Mammary epithelial cell (primary cell): ENCODE measurements at regions of chr9 and their contacts with region 1.

Region 1: DNA sequence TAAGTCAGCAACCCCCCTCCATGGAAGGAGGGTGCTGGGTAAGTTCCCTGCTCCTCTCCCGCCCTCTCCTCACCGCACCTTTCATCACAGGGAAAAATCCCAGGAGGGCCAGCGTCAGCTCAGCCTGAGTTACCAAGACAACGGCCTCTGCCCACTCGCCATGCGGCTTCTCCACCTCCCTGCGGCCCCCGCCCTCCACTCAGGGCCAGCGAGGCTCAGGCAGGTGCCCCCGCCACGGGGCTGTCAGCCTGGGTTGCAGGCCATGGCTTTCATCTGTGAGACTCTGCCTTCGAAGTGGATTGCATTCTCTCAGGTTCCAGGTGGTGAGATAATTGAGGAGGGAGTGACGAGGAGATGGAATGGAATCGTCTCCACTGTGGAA is 27.2 kb upstream of the LAMC3 start:
- DNase-seq: no peak
- H3K4me3 ChIP-seq: no peak overlapping the region
- H3K27ac ChIP-seq: no peak overlapping the region
- H3K4me1 ChIP-seq: no peaks in the 10 kb centered on the region
- H3K27me3 ChIP-seq: no peaks in the 10 kb centered on the region
- CTCF ChIP-seq: no peak

Region 2: DNA sequence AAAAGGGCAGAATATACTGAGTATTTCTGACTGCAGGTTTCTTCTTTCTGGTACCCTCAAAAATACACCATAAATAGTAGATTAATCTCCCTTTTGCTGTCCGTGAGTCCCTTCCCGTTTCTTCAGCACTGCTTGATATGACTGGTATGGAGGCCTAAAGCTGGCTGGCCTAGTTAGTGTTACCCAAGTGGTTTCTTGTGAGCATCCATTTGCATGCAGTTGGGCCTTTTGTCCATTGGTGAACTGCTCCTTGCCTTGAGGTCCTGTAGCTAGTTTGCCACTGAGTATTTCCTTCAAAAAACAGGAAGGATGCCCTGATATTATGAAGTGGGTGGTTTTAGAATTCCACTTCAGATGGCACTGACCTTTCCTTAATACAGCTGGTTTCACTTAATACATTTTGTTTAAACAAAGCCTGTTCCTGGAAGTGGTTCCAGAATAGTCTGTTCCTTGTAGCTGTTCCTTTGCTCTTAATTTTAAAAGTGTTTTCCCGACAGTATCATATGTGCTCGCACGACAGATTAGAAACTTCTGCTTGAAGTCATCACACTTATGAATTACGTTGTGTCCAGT is 186.7 kb before region 1 on chr9:
- CTCF ChIA-PET with region 1: no interaction called
- dilution Hi-C with region 1: loop called (anchors 5 kb)
- in situ Hi-C with region 1: no loop called
- intact Hi-C with region 1: no loop called
- DNase-seq: no peak
- H3K4me3 ChIP-seq: no peak overlapping the region
- H3K27ac ChIP-seq: no peak overlapping the region
- H3K4me1 ChIP-seq: no peaks in the 10 kb centered on the region
- H3K27me3 ChIP-seq: no peaks in the 10 kb centered on the region
- CTCF ChIP-seq: no peak

Region 3: DNA sequence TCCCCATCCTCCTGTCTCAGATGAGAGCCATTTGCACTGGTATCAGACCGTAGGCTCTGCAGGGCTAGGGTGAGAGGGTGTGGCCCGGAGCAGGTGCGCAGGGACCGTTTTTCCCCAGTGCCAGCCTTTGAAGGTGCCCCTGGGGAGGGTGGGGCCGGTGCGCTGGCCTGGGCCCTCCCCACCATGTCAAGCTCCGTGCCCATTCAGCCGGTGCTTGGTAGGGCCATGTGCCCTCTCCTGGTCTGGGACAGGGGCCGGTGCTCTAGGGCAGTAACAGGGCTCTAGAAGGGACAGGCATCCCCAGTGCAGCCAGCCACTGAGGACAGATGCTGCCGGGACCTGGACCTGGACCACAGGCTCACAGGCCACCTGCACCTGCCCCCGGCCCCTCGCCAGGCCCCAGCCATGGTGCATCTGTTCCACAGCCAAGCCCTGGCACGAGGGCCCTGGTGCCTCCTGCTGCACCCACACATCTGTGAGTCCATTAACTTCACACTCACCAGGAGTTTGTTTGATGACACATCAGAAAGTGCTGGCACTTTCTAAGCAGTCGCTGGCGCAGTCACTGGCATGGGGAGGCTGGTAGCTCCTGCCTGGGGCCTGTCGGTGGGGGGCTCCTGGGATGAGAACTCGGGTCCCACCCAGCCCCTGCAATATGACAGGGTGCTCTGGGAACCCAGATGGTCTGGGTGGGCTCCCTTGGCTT is 80.1 kb before region 1 on chr9:
- CTCF ChIA-PET with region 1: no interaction called
- dilution Hi-C with region 1: loop called (anchors 5 kb)
- in situ Hi-C with region 1: no loop called
- intact Hi-C with region 1: no loop called
- DNase-seq: no peak
- H3K4me3 ChIP-seq: no peak overlapping the region
- H3K27ac ChIP-seq: no peak overlapping the region
- H3K4me1 ChIP-seq: no peaks in the 10 kb centered on the region
- H3K27me3 ChIP-seq: no peaks in the 10 kb centered on the region
- CTCF ChIP-seq: no peak

Region 4: GRCh38 chr9:131018621-131019020 is 36.9 kb after region 1 on chr9:
- CTCF ChIA-PET with region 1: no interaction called
- dilution Hi-C with region 1: loop called (anchors 5 kb)
- in situ Hi-C with region 1: no loop called
- intact Hi-C with region 1: no loop called
- DNase-seq: no peak
- H3K4me3 ChIP-seq: no peak overlapping the region
- H3K27ac ChIP-seq: no peak overlapping the region
- H3K4me1 ChIP-seq: no peaks in the 10 kb centered on the region
- H3K27me3 ChIP-seq: no peaks in the 10 kb centered on the region
- CTCF ChIP-seq: peak; percentile 40 to 48